ENCODE measurements at regions of chr4 and their contacts with region 1.

Region 1: DNA sequence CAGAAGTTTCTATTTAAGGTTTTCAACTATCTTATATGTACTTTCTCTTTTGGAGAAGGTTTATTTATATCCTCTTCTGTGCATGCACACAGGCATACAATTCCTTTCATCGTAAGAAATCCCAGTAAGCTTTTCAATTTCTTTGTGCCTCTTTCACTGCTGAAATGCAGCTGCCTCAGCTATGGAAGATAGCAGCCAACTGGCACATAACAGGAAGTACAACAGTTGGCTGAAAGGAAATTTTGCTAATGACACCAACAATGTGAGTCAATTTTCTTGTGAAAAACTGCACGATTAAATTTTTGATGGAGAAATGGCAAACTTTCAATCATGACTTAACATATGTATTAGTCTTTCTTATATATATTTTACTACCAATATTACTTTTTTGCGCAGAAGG is 74.5 kb upstream of the PAQR3 start:
- DNase-seq: no peak
- H3K4me3 ChIP-seq: no peak overlapping the region
- H3K4me3 Mint-ChIP-seq: no peak overlapping the region
- H3K27ac ChIP-seq: no peak overlapping the region
- H3K27ac Mint-ChIP-seq: no peak overlapping the region
- H3K4me1 ChIP-seq: no peaks in the 10 kb centered on the region
- H3K4me1 Mint-ChIP-seq: no peaks in the 10 kb centered on the region
- H3K27me3 ChIP-seq: no peaks in the 10 kb centered on the region
- H3K27me3 Mint-ChIP-seq: peaks cover 5 to 10% of the 10 kb centered on the region in 2 donors

Region 2: DNA sequence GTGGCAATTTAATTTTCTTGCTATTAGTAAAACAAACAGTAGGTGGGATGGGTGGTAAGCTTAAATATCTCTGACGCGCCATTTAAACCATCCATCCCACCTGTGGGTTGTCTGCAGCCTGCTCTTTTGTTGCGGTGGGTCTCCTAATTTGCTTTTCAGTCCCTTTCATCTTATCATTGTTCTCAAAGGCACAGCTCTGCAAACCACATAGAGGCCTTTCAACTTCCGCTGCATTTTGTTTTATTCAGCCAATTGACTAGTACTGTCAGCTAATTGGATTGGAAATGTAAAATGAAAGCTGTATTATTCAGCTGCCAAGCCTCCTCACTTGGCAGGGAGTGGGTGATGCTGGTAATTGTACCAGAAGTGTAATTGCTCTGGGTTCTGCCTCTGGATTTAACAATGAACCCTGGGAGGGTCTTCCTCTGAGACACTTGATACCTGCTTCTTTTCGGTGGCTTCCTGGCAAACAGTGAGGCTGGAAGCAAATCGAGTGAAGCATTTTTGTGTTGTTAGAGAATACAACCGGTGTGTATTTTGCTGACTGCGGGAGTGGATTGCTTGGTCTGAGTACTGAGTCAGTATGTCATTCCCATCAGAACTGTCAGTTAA is 791.1 kb before region 1 on chr4:
- CTCF ChIA-PET with region 1: no interaction called
- POLR2A ChIA-PET with region 1: no interaction called
- intact Hi-C with region 1: no loop called
- DNase-seq: no peak
- H3K4me3 ChIP-seq: no peak overlapping the region
- H3K4me3 Mint-ChIP-seq: no peak overlapping the region
- H3K27ac ChIP-seq: no peak overlapping the region
- H3K27ac Mint-ChIP-seq: no peak overlapping the region
- H3K4me1 ChIP-seq: no peaks in the 10 kb centered on the region
- H3K4me1 Mint-ChIP-seq: no peaks in the 10 kb centered on the region
- H3K27me3 ChIP-seq: no peaks in the 10 kb centered on the region
- H3K27me3 Mint-ChIP-seq: no peaks in the 10 kb centered on the region

Region 3: GRCh38 chr4:78951862-78952472 is 61.8 kb before region 1 on chr4:
- CTCF ChIA-PET with region 1: no interaction called
- POLR2A ChIA-PET with region 1: no interaction called
- intact Hi-C with region 1: no loop called
- DNase-seq: peak in 4 of 5 donors; percentile 41 to 45 (median 41)
- H3K4me3 ChIP-seq: no peak overlapping the region
- H3K4me3 Mint-ChIP-seq: no peak overlapping the region
- H3K27ac ChIP-seq: no peak overlapping the region
- H3K27ac Mint-ChIP-seq: no peak overlapping the region
- H3K4me1 ChIP-seq: no peaks in the 10 kb centered on the region
- H3K4me1 Mint-ChIP-seq: no peaks in the 10 kb centered on the region
- H3K27me3 ChIP-seq: no peaks in the 10 kb centered on the region
- H3K27me3 Mint-ChIP-seq: peaks cover 12 to 18% of the 10 kb centered on the region in 2 donors

Region 4: GRCh38 chr4:79042079-79042674 is 28.4 kb after region 1 on chr4:
- CTCF ChIA-PET with region 1: no interaction called
- POLR2A ChIA-PET with region 1: no interaction called
- intact Hi-C with region 1: loop called (anchors 1 kb)
- DNase-seq: peak in 1 of 5 donors; percentile 1
- H3K4me3 ChIP-seq: no peak overlapping the region
- H3K4me3 Mint-ChIP-seq: no peak overlapping the region
- H3K27ac ChIP-seq: no peak overlapping the region
- H3K27ac Mint-ChIP-seq: no peak overlapping the region
- H3K4me1 ChIP-seq: no peaks in the 10 kb centered on the region
- H3K4me1 Mint-ChIP-seq: no peaks in the 10 kb centered on the region
- H3K27me3 ChIP-seq: no peaks in the 10 kb centered on the region
- H3K27me3 Mint-ChIP-seq: no peaks in the 10 kb centered on the region